T-cell (primary cell): ENCODE measurements at regions of chr6 and their contacts with region 1.

Region 1: DNA sequence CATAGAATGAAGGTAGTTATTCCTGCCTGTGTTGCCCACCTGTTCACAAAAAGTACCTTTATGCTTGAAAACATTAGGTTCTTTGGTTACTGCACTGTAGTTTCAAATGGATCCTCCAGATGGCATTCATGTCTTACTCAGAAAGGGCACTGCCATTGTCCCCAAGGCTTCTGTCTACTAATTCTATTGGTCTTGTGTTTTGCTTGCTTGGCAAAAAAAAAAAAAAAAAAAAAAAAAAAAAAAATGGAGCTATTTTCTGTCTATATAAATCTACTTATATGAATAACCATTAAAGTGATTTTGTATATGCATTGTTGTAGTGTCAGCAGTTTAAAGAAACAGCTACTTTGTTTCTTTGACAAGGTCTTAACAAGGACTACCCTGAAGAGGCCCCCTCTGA is 12.7 kb upstream of the EFHC1 start:
- DNase-seq: peak in 3 of 35 experiments; percentile 22 to 63 (median 23)
- ATAC-seq: peak; percentile 61 to 86 (median 73)
- H3K4me3 ChIP-seq: no peak overlapping the region
- H3K4me3 Mint-ChIP-seq: no peak overlapping the region
- H3K27ac ChIP-seq: no peak overlapping the region
- H3K27ac Mint-ChIP-seq: peak overlapping the region; percentile 46 to 66
- H3K4me1 ChIP-seq: peaks cover 0 to 11% of the 10 kb centered on the region in 2 experiments
- H3K4me1 Mint-ChIP-seq: peaks cover 29 to 36% (median 36%) of the 10 kb centered on the region in 3 donors
- H3K27me3 ChIP-seq: no peaks in the 10 kb centered on the region
- H3K27me3 Mint-ChIP-seq: no peaks in the 10 kb centered on the region

Region 2: GRCh38 chr6:51753635-51754034 is 653.8 kb before region 1 on chr6:
- CTCF ChIA-PET with region 1: no interaction called
- POLR2A ChIA-PET with region 1: no interaction called
- DNase-seq: no peak
- ATAC-seq: no peak
- H3K4me3 ChIP-seq: no peak overlapping the region
- H3K4me3 Mint-ChIP-seq: no peak overlapping the region
- H3K27ac ChIP-seq: no peak overlapping the region
- H3K27ac Mint-ChIP-seq: no peak overlapping the region
- H3K4me1 ChIP-seq: no peaks in the 10 kb centered on the region
- H3K4me1 Mint-ChIP-seq: no peaks in the 10 kb centered on the region
- H3K27me3 ChIP-seq: no peaks in the 10 kb centered on the region
- H3K27me3 Mint-ChIP-seq: no peaks in the 10 kb centered on the region

Region 3: GRCh38 chr6:52337633-52338290 is 69.7 kb before region 1 on chr6:
- CTCF ChIA-PET with region 1: interaction called in 1 of 2 experiments, 10 read pairs
- POLR2A ChIA-PET with region 1: interaction called in 1 of 2 experiments, 6 read pairs
- DNase-seq: no peak
- ATAC-seq: no peak
- H3K4me3 ChIP-seq: no peak overlapping the region
- H3K4me3 Mint-ChIP-seq: no peak overlapping the region
- H3K27ac ChIP-seq: no peak overlapping the region
- H3K27ac Mint-ChIP-seq: peak overlapping the region; percentile 1 to 97
- H3K4me1 ChIP-seq: peaks cover 32 to 43% of the 10 kb centered on the region in 2 experiments
- H3K4me1 Mint-ChIP-seq: peaks cover 64 to 69% (median 65%) of the 10 kb centered on the region in 3 donors
- H3K27me3 ChIP-seq: no peaks in the 10 kb centered on the region
- H3K27me3 Mint-ChIP-seq: no peaks in the 10 kb centered on the region

Region 4: GRCh38 chr6:52419809-52420670 is 12.6 kb after region 1 on chr6 and contains the start of gene EFHC1:
- CTCF ChIA-PET with region 1: interaction called, 9 to 11 read pairs
- POLR2A ChIA-PET with region 1: interaction called in 1 of 2 experiments, 3 read pairs
- DNase-seq: peak; percentile 93 to 99 (median 96)
- ATAC-seq: peak; percentile 91 to 95 (median 94)
- H3K4me3 ChIP-seq: peak within 1 kb of the TSS; percentile 60 to 67
- H3K4me3 Mint-ChIP-seq: no peak within 1 kb of the TSS
- H3K27ac ChIP-seq: peak within 1 kb of the TSS; percentile 62
- H3K27ac Mint-ChIP-seq: peak within 1 kb of the TSS in 1 of 2 donors; percentile 66
- H3K4me1 ChIP-seq: peaks cover 7 to 17% of the 10 kb centered on the region in 2 experiments
- H3K4me1 Mint-ChIP-seq: peaks cover 15 to 20% (median 15%) of the 10 kb centered on the region in 3 donors
- H3K27me3 ChIP-seq: peaks cover 0 to 8% of the 10 kb centered on the region in 2 experiments
- H3K27me3 Mint-ChIP-seq: no peaks in the 10 kb centered on the region
- total RNA-seq, gene EFHC1: 4.5 to 8.6 (median 6.2) TPM

Region 5: GRCh38 chr6:52435345-52435744 is 27.9 kb after region 1 on chr6:
- CTCF ChIA-PET with region 1: no interaction called
- POLR2A ChIA-PET with region 1: no interaction called
- DNase-seq: no peak
- ATAC-seq: no peak
- H3K4me3 ChIP-seq: no peak overlapping the region
- H3K4me3 Mint-ChIP-seq: no peak overlapping the region
- H3K27ac ChIP-seq: no peak overlapping the region
- H3K27ac Mint-ChIP-seq: no peak overlapping the region
- H3K4me1 ChIP-seq: no peaks in the 10 kb centered on the region
- H3K4me1 Mint-ChIP-seq: peaks cover 2 to 7% (median 4%) of the 10 kb centered on the region in 3 donors
- H3K27me3 ChIP-seq: peaks cover 0 to 2% of the 10 kb centered on the region in 2 experiments
- H3K27me3 Mint-ChIP-seq: no peaks in the 10 kb centered on the region

Region 6: DNA sequence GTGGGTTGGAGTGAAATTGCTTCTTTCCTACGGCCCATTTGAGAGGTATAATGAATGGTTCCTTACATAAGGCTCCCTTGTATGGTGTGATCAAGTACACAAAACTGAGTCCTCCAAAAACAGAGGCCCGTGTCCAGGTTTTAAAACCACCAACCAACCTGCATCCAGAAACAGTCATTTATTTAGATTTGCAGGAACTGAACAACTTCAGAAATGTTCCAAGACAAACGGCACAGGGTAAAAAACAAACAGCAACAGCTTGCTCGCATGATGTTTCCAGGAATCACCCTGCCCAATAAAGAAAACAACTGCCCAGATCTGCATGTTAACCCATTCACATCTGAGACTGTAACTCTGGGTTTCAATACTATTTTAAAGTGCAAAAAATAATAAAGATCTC is 209.6 kb after region 1 on chr6:
- CTCF ChIA-PET with region 1: no interaction called
- POLR2A ChIA-PET with region 1: no interaction called
- DNase-seq: no peak
- ATAC-seq: no peak
- H3K4me3 ChIP-seq: no peak overlapping the region
- H3K4me3 Mint-ChIP-seq: no peak overlapping the region
- H3K27ac ChIP-seq: no peak overlapping the region
- H3K27ac Mint-ChIP-seq: no peak overlapping the region
- H3K4me1 ChIP-seq: no peaks in the 10 kb centered on the region
- H3K4me1 Mint-ChIP-seq: no peaks in the 10 kb centered on the region
- H3K27me3 ChIP-seq: peaks cover 0 to 2% of the 10 kb centered on the region in 2 experiments
- H3K27me3 Mint-ChIP-seq: peaks cover 8 to 13% of the 10 kb centered on the region in 2 donors

Region 7: GRCh38 chr6:53048431-53049195 is 641.1 kb after region 1 on chr6:
- CTCF ChIA-PET with region 1: interaction called in 1 of 2 experiments, 10 read pairs
- POLR2A ChIA-PET with region 1: no interaction called
- DNase-seq: peak in 1 of 35 experiments; percentile 45
- ATAC-seq: peak; percentile 64 to 96 (median 79)
- H3K4me3 ChIP-seq: peak overlapping the region in 1 of 2 donors; percentile 27
- H3K4me3 Mint-ChIP-seq: peak overlapping the region; percentile 53 to 69 (median 61)
- H3K27ac ChIP-seq: no peak overlapping the region
- H3K27ac Mint-ChIP-seq: peak overlapping the region; percentile 58 to 59
- H3K4me1 ChIP-seq: peaks cover 7 to 10% of the 10 kb centered on the region in 2 experiments
- H3K4me1 Mint-ChIP-seq: peaks cover 29 to 41% (median 29%) of the 10 kb centered on the region in 3 donors
- H3K27me3 ChIP-seq: no peaks in the 10 kb centered on the region
- H3K27me3 Mint-ChIP-seq: no peaks in the 10 kb centered on the region

Region 8: GRCh38 chr6:53281518-53282215 is 874.2 kb after region 1 on chr6:
- CTCF ChIA-PET with region 1: no interaction called
- POLR2A ChIA-PET with region 1: no interaction called
- DNase-seq: no peak
- ATAC-seq: no peak
- H3K4me3 ChIP-seq: no peak overlapping the region
- H3K4me3 Mint-ChIP-seq: no peak overlapping the region
- H3K27ac ChIP-seq: no peak overlapping the region
- H3K27ac Mint-ChIP-seq: peak overlapping the region; percentile 34 to 69
- H3K4me1 ChIP-seq: peaks cover 2 to 24% of the 10 kb centered on the region in 2 experiments
- H3K4me1 Mint-ChIP-seq: peaks cover 40 to 74% (median 53%) of the 10 kb centered on the region in 3 donors
- H3K27me3 ChIP-seq: no peaks in the 10 kb centered on the region
- H3K27me3 Mint-ChIP-seq: no peaks in the 10 kb centered on the region